A549 (cell line): ENCODE measurements at regions of chr9 and their contacts with region 1.

Region 1: GRCh38 chr9:104927912-104928740 is at the start of gene ABCA1:
- DNase-seq: peak; percentile 79
- ATAC-seq: peak; percentile 62 to 67
- H3K4me3 ChIP-seq: peak within 1 kb of the TSS; percentile 73
- H3K27ac ChIP-seq: peak within 1 kb of the TSS; percentile 76 to 91
- H3K4me1 ChIP-seq: peaks cover 6% of the 10 kb centered on the region; the same call in 2 of the 3 replicates
- CTCF ChIP-seq: no peak
- EP300 ChIP-seq: no peak
- POLR2A ChIP-seq: 0 out of 2 replicates have a peak, but pooled peaks have one; percentile 13
- RAD21 ChIP-seq: 0 out of 5 replicates have a peak, but pooled peaks of 1 of the 2 experiments have one; percentile 23
- polyA plus RNA-seq, gene ABCA1: 12.0 and 15.5 TPM in 2 replicates

Region 2: DNA sequence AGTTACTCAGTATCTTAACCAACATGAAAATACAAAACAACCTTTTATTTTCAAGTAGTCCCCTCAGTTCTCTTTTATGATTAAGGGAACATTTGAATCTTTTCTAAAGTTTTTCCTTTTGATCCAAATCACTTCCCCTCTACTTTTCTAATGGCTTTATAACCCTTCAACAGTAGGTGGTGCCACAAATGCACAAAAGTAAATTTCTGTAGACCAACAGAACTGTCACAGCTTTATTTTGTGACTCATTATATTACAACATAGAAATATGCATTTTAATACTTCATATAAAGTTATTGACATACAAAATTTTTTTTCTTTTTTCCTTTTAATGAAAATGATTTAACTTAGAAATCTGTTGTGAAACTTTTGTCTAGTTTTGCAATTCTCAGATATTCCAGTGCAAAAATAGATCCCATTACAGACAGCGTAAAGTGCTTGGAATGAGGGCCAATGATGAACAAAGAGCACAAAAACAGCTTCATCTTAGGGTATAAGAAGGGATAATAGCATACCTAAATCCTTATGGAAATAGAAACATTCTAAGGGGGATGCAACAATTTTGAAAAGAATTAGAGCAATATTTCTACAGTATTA is 147.2 kb before region 1 on chr9:
- CTCF ChIA-PET with region 1: no interaction called
- POLR2A ChIA-PET with region 1: no interaction called
- DNase-seq: peak; percentile 21 to 44
- ATAC-seq: peak; percentile 80
- H3K4me3 ChIP-seq: no peak overlapping the region
- H3K27ac ChIP-seq: no peak overlapping the region
- H3K4me1 ChIP-seq: 0 out of 3 replicates have a peak, but pooled peaks cover 3% of the 10 kb centered on the region
- CTCF ChIP-seq: peak; percentile 70
- EP300 ChIP-seq: no peak
- POLR2A ChIP-seq: no peak
- RAD21 ChIP-seq: peak; percentile 74 to 77

Region 3: DNA sequence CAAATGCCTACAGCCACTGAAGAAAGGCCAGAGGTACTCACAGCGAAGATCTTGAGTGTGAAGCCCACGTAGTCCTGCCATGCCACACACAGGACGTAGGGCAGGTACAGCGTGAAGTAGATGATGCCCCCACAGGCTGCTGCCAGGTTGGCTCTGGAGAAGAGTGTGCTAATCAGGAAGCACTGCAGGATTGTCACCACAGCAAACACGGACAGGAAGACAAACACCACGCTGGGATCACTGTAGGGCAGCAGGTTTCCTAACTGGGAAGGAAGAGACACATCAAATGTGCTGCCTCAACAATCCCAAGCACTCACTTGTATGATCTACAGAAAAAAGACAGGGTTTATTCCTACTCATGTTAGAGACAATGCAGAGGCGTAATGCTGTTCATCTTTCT is 101.2 kb before region 1 on chr9:
- CTCF ChIA-PET with region 1: no interaction called
- POLR2A ChIA-PET with region 1: no interaction called
- DNase-seq: no peak
- ATAC-seq: no peak
- H3K4me3 ChIP-seq: no peak overlapping the region
- H3K27ac ChIP-seq: no peak overlapping the region
- H3K4me1 ChIP-seq: 0 out of 3 replicates have a peak, but pooled peaks cover 7% of the 10 kb centered on the region
- CTCF ChIP-seq: no peak
- EP300 ChIP-seq: no peak
- POLR2A ChIP-seq: no peak
- RAD21 ChIP-seq: no peak

Region 4: GRCh38 chr9:104882086-104882485 is 46.0 kb before region 1 on chr9:
- CTCF ChIA-PET with region 1: no interaction called
- POLR2A ChIA-PET with region 1: no interaction called
- DNase-seq: no peak
- ATAC-seq: no peak
- H3K4me3 ChIP-seq: no peak overlapping the region
- H3K27ac ChIP-seq: no peak overlapping the region
- H3K4me1 ChIP-seq: no peaks in the 10 kb centered on the region
- CTCF ChIP-seq: no peak
- EP300 ChIP-seq: no peak
- POLR2A ChIP-seq: no peak
- RAD21 ChIP-seq: no peak

Region 5: DNA sequence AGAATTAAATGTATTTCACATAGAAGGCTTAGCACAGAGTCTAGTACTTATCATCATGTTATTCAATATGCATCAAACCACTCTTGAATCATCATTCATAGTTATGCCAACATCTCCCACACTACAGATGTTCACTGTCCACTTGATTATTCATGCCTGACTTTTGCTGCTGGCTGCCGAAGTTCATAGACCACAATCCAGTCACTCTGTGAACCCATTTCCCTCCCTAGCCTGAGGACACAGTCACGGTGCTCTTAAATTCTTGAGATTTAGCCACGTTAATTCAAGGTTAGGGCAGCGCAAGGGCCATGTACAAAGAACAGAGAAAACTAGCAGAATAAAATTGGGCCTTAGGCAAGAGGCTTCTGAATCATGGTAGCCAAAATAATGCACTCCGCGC is 32.6 kb before region 1 on chr9:
- CTCF ChIA-PET with region 1: interaction called, 3 read pairs
- POLR2A ChIA-PET with region 1: interaction called, 10 read pairs
- DNase-seq: no peak
- ATAC-seq: no peak
- H3K4me3 ChIP-seq: no peak overlapping the region
- H3K27ac ChIP-seq: no peak overlapping the region
- H3K4me1 ChIP-seq: no peaks in the 10 kb centered on the region
- CTCF ChIP-seq: no peak
- EP300 ChIP-seq: no peak
- POLR2A ChIP-seq: no peak
- RAD21 ChIP-seq: no peak

Region 6: GRCh38 chr9:104991144-104991953 is 63.2 kb after region 1 on chr9:
- CTCF ChIA-PET with region 1: interaction called, 8 read pairs
- POLR2A ChIA-PET with region 1: interaction called, 52 read pairs
- DNase-seq: peak; percentile 54 to 87
- ATAC-seq: peak; percentile 84 to 89
- H3K4me3 ChIP-seq: peak overlapping the region; percentile 61
- H3K27ac ChIP-seq: peak overlapping the region; percentile 92 to 96
- H3K4me1 ChIP-seq: peaks cover 41% of the 10 kb centered on the region
- CTCF ChIP-seq: no peak
- EP300 ChIP-seq: no peak
- POLR2A ChIP-seq: peak; percentile 20
- RAD21 ChIP-seq: 0 out of 5 replicates have a peak, but pooled peaks have one; percentile 3 to 25

Region 7: GRCh38 chr9:105150991-105151685 is 223.0 kb after region 1 on chr9:
- CTCF ChIA-PET with region 1: interaction called, 24 read pairs
- POLR2A ChIA-PET with region 1: interaction called, 4 read pairs
- DNase-seq: peak in 1 of 2 experiments; percentile 23
- ATAC-seq: peak; percentile 41 to 57; a peak in 3 of 6 replicates
- H3K4me3 ChIP-seq: no peak overlapping the region
- H3K27ac ChIP-seq: peak overlapping the region; percentile 47 to 69
- H3K4me1 ChIP-seq: peaks cover 38% of the 10 kb centered on the region
- CTCF ChIP-seq: no peak
- EP300 ChIP-seq: no peak
- POLR2A ChIP-seq: no peak
- RAD21 ChIP-seq: 0 out of 5 replicates have a peak, but pooled peaks of 1 of the 2 experiments have one; percentile 10

Region 8: DNA sequence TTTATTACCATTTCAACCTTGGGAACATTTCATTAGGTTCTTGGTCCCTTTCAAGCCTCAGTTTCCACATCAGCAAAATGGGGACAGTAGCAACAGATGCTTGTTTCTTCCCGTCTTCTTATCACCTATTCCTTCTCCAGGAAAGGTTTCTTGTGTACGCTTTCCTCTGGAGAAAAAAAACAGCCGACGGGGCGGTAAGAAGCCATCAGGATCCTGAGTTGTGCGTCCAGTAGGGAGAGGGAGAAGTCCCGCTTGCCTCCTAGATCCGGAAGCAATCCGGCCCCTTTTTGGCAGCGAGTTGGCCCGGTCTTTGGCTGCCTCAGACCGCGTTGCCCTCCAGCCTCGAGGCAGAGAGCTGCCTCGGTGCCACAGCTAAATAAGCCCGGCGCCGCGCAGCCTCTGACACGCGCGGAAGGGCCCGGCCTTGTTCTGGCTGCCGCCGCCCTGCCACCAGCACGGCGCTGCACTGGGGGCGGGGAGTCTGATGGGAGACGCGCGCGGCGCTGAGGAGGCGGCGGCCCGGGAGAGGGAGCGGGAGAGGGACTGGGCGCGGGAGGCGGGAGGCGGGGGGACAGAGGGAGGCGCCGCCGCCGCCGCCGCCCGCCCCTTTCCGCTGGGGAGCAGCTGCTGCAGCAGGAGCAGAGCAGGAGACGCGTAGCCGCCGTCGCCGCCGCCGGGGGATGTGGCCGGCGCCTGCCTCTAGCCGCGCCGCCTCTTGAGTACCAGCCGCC is 316.0 kb after region 1 on chr9 and contains the start of gene SLC44A1:
- CTCF ChIA-PET with region 1: interaction called, 6 read pairs
- POLR2A ChIA-PET with region 1: interaction called, 20 read pairs
- DNase-seq: peak; percentile 69 to 96
- ATAC-seq: peak; percentile 94 to 98
- H3K4me3 ChIP-seq: peak within 1 kb of the TSS; percentile 97
- H3K27ac ChIP-seq: peak within 1 kb of the TSS; percentile 93 to 95
- H3K4me1 ChIP-seq: peaks cover 35% of the 10 kb centered on the region
- CTCF ChIP-seq: no peak; the same call in 2 of the 3 replicates
- EP300 ChIP-seq: 0 out of 5 replicates have a peak, but pooled peaks of 1 of the 2 experiments have one; percentile 31
- POLR2A ChIP-seq: peak; percentile 56
- RAD21 ChIP-seq: peak; percentile 23 to 49; a peak in 2 of 5 replicates
- polyA plus RNA-seq, gene SLC44A1: 19.6 and 38.8 TPM in 2 replicates